PC-3 (cell line): ENCODE measurements at regions of chr14 and their contacts with region 1.

Region 1: GRCh38 chr14:52514046-52514811 is 38.1 kb downstream of the TXNDC16 start:
- DNase-seq: no peak
- ATAC-seq: no peak
- H3K4me3 ChIP-seq: no peak overlapping the region
- H3K27ac ChIP-seq: no peak overlapping the region
- H3K4me1 ChIP-seq: peaks cover 12% of the 10 kb centered on the region
- H3K27me3 ChIP-seq: no peaks in the 10 kb centered on the region
- CTCF ChIP-seq: no peak

Region 2: GRCh38 chr14:52485350-52485960 is 28.8 kb before region 1 on chr14:
- CTCF ChIA-PET with region 1: no interaction called
- POLR2A ChIA-PET with region 1: no interaction called
- intact Hi-C with region 1: loop called (anchors 2 kb)
- DNase-seq: peak; percentile 24
- ATAC-seq: peak; percentile 85
- H3K4me3 ChIP-seq: no peak overlapping the region
- H3K27ac ChIP-seq: no peak overlapping the region
- H3K4me1 ChIP-seq: peaks cover 14% of the 10 kb centered on the region; the same call in 1 of the 2 replicates
- H3K27me3 ChIP-seq: no peaks in the 10 kb centered on the region
- CTCF ChIP-seq: no peak

Region 3: DNA sequence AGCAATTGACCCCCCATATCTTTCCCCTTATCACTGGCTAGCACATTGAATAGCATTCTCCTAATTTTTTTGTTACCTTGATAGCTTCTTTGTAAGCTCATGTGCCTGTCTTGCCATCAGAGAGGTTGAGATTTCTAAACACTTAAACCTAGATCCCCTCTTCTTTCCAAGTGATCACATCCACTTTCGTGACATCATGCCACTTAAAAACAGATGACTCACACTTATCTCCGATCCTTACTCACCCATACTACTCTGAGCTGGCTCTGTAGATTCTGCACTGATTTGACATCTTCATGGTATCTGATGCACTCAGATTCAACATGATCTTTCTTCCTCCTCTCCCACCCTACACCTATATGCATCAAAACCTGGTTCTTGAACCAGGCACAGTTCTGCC is 48.9 kb after region 1 on chr14:
- CTCF ChIA-PET with region 1: no interaction called
- POLR2A ChIA-PET with region 1: no interaction called
- intact Hi-C with region 1: no loop called
- DNase-seq: peak; percentile 60
- ATAC-seq: peak; percentile 100
- H3K4me3 ChIP-seq: no peak overlapping the region
- H3K27ac ChIP-seq: no peak overlapping the region
- H3K4me1 ChIP-seq: peaks cover 4% of the 10 kb centered on the region; the same call in 1 of the 2 replicates
- H3K27me3 ChIP-seq: no peaks in the 10 kb centered on the region
- CTCF ChIP-seq: no peak